Left lung (tissue), 14 donors: ENCODE measurements at regions of chr6 and their contacts with region 1.

Region 1: GRCh38 chr6:56292505-56293181 is 45.3 kb upstream of the COL21A1 start:
- DNase-seq: peak in 2 of 4 donors; percentile 68 to 80
- ATAC-seq: peak; percentile 80
- H3K4me3 ChIP-seq: no peak overlapping the region
- H3K27ac ChIP-seq: no peak overlapping the region
- H3K4me1 ChIP-seq: peaks cover 0 to 7% of the 10 kb centered on the region in 2 donors
- H3K27me3 ChIP-seq: no peaks in the 10 kb centered on the region
- CTCF ChIP-seq: peak; percentile 33 to 37

Region 2: DNA sequence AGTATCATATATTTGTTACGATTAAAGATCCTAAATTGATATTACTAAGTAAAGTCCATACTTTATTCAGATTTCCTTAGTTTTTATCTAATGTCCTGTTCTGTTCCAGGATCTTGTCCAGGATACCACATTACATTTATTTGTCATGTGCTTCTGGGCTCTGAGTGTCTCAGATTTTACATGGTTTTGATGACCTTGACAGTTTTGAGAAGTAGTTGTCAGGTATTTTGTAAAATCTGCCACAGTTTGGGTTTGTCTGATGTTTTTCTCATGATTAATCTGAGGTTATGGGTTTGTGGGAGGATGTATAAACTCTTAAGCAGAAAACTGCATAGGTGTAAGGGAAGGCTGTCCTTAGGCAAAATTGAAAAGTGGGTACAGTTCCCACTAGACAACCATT is 307.3 kb before region 1 on chr6:
- intact Hi-C with region 1: loop called in 1 of 2 experiments (anchors 5 kb)
- DNase-seq: no peak
- ATAC-seq: no peak
- H3K4me3 ChIP-seq: no peak overlapping the region
- H3K27ac ChIP-seq: no peak overlapping the region
- H3K4me1 ChIP-seq: no peaks in the 10 kb centered on the region
- H3K27me3 ChIP-seq: no peaks in the 10 kb centered on the region
- CTCF ChIP-seq: no peak

Region 3: GRCh38 chr6:56046576-56046975 is 246.1 kb before region 1 on chr6:
- intact Hi-C with region 1: no loop called
- DNase-seq: peak in 2 of 4 donors; percentile 70 to 76
- ATAC-seq: peak; percentile 73
- H3K4me3 ChIP-seq: no peak overlapping the region
- H3K27ac ChIP-seq: peak overlapping the region in 1 of 2 donors; percentile 9
- H3K4me1 ChIP-seq: no peaks in the 10 kb centered on the region
- H3K27me3 ChIP-seq: no peaks in the 10 kb centered on the region
- CTCF ChIP-seq: no peak